Activated CD4-positive, alpha-beta T cell treated with anti-CD3 and anti-CD28 coated beads for 36 hours (primary cell): ENCODE measurements at regions of chr10 and their contacts with region 1.

Region 1: DNA sequence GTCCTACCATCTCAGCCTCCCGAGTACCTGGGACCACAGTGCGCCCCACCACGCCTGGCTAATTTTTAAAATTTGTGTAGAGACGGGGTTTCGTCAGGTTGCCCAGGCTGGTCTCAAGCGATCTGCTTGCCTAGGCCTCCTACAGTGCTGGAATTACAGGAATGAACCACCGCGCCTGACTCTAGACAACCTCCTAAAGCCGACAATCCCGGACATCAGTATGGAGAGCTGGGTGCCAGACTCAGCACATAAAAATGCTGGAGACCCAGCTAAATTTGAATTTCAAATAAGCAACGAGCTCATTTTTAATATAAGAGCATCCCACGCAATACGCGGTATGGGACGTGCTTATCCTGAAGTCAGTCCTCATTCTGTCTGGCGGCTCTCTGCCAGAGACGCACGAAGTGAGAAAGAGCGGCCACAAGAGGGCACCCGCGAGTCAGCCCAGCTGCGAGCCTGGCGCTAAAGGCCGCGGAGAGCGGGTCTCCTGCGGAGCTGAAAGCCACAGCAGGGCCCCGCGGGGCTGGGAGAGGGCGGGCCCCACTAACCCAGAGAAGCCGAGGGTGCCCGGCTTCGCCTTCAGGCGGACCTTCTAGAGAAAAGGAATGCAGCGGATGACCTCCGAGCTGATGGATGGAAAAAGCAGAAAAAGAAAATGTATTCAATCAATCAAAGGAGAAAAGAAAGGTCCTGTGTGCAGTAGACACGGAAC is 7.0 kb downstream of the CALY start:
- DNase-seq: peak; percentile 94
- ATAC-seq: peak; percentile 96
- H3K4me3 Mint-ChIP-seq: peak overlapping the region; percentile 23
- H3K27ac Mint-ChIP-seq: no peak overlapping the region
- H3K4me1 Mint-ChIP-seq: peaks cover 10% of the 10 kb centered on the region
- H3K27me3 Mint-ChIP-seq: peaks cover 31% of the 10 kb centered on the region

Region 2: DNA sequence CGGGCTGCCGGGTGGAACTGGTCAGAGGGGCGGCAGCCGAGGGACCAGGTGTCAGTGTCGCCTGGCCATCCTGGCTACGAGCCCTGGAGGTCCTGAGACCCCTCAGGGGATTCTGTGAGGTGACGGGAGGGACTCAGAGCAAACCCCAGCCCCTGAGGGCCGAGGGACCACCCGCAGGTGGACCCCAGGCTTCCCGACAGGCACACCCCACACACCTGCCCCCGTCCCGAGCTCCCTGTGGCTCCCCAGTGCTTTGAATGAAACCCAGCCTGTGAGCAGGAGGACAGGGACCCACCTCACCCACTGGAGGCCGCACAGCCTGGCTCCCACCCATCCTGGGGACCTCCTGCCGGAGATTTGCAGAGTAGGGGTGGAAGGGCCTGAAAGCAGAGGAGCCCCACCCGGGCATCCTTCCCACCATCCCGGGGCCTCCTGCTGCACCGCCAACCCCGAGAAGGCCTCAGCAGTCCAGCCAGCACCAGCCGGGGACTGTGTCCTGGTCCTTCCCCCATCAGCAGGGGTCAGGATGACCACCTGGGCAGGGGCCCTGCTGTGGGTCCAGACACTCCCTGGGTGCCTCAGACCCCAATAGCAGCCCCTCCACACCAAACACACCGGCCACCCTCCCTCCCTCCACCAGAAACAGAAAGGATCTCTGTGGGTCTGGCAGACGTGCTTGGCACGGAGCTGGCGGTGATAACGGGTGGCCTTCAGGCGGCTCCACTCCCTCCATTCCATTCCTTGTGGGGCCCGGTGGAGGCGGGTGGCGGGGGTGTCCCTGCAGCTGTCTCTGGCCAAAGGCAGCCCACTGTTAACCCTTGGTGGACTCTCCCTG is 78.0 kb before region 1 on chr10:
- CTCF ChIA-PET with region 1: no interaction called
- POLR2A ChIA-PET with region 1: no interaction called
- intact Hi-C with region 1: no loop called
- DNase-seq: no peak
- ATAC-seq: no peak
- H3K4me3 Mint-ChIP-seq: no peak overlapping the region
- H3K27ac Mint-ChIP-seq: no peak overlapping the region
- H3K4me1 Mint-ChIP-seq: no peaks in the 10 kb centered on the region
- H3K27me3 Mint-ChIP-seq: no peaks in the 10 kb centered on the region

Region 3: DNA sequence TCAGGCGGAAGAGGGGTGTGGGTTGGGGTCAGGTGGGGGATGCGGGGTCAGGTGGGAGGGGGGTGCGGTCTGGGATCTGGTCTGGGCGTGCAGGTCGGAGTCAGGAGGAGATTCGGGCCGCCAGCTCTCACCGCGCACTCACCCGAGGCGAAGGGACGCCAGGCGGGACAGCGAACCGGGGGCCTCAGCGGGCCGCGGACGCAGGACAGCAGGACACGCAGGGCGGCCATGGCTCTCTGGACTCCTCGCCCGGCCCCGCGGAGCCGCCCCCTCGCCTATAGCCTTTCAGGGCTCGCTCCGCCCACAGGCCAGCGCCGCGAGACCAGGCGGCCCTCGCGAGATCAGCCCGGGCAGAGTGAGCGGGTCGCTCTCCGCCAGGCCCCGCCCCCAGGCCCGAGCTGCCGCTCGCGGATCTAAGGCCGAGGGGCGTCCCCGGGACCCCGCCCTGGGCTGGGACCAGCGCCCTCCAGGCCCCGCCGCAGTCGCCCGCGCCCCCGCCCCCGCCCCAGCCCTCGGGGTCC is 43.5 kb after region 1 on chr10 and contains the start of gene ECHS1:
- CTCF ChIA-PET with region 1: interaction called, 6 read pairs
- POLR2A ChIA-PET with region 1: no interaction called
- intact Hi-C with region 1: loop called in 1 of 2 experiments (anchors 1 kb)
- DNase-seq: peak; percentile 97
- ATAC-seq: peak; percentile 100
- H3K4me3 Mint-ChIP-seq: peak within 1 kb of the TSS; percentile 73
- H3K27ac Mint-ChIP-seq: peak within 1 kb of the TSS; percentile 79
- H3K4me1 Mint-ChIP-seq: peaks cover 11% of the 10 kb centered on the region
- H3K27me3 Mint-ChIP-seq: no peaks in the 10 kb centered on the region
- total RNA-seq, gene ECHS1: 42.0 to 56.7 TPM

Region 4: GRCh38 chr10:133394064-133394663 is 64.5 kb after region 1 on chr10 and contains the start of gene MTG1:
- CTCF ChIA-PET with region 1: interaction called, 4 read pairs
- POLR2A ChIA-PET with region 1: no interaction called
- intact Hi-C with region 1: loop called (anchors 1 to 5 kb)
- DNase-seq: peak; percentile 97
- ATAC-seq: peak; percentile 76
- H3K4me3 Mint-ChIP-seq: peak within 1 kb of the TSS; percentile 90
- H3K27ac Mint-ChIP-seq: peak within 1 kb of the TSS; percentile 93
- H3K4me1 Mint-ChIP-seq: peaks cover 51% of the 10 kb centered on the region
- H3K27me3 Mint-ChIP-seq: no peaks in the 10 kb centered on the region
- total RNA-seq, gene MTG1: 46.9 to 52.1 TPM

Region 5: DNA sequence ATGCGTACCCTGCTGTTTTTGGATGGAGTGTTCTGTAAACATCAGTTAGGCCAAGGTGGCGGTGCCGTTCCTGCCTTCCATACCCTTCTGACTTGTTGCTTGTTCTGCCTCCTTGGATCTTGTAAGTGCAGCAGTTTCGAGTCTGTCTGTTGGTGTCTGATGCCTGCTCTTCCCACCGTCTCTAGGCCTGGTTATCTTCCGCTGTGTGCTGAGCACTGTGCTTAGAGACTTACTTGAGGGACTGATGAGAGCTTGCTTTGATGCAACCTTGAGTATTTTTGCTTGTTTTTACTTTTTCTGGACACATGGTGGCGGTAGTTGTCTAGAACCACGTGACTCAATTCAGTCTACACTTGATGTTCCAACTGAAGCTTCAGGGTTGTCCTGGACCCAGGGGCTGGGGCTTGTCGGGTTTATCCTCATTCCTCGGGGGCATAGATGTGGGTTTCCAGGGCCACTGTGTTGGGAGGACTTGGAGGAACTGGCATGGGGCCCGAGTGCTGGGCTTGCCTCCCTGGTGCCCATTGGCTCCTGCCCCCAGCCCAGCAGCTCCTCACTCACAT is 109.1 kb after region 1 on chr10:
- CTCF ChIA-PET with region 1: interaction called, 9 read pairs
- POLR2A ChIA-PET with region 1: interaction called, 6 read pairs
- intact Hi-C with region 1: loop called in 1 of 2 experiments (anchors 2 kb)
- DNase-seq: no peak
- ATAC-seq: peak; percentile 59
- H3K4me3 Mint-ChIP-seq: no peak overlapping the region
- H3K27ac Mint-ChIP-seq: no peak overlapping the region
- H3K4me1 Mint-ChIP-seq: peaks cover 17% of the 10 kb centered on the region
- H3K27me3 Mint-ChIP-seq: peaks cover 10% of the 10 kb centered on the region

Region 6: DNA sequence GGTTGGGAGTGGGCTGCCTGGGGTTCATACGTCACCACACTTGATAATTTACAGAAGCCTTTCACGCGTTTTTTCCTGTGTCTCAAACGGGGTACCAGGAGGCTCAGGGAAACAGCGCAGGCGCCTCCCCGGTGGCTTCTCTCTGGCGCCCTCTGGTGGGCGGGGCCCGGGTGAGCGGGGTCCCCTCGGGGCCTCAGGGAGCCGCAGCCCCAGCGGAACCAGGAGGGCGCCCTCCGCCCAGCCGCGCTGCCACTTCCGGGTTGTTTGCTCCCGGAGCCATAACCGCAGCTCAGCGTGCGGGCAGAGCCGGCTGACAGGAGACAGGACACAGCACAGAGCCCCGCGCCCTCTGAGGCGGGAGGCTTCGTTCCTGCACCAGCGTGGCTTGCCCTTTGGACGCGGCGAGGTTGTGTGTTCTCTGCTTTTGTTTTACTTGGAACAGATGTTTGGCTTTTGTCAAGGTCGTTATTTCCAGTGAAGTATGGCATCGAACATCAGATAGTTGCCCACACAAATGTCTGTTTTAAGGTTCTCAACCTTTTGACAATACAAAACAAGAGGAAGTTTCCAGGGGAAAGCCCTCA is 190.6 kb after region 1 on chr10:
- CTCF ChIA-PET with region 1: interaction called, 14 read pairs
- POLR2A ChIA-PET with region 1: no interaction called
- intact Hi-C with region 1: loop called (anchors 1 to 5 kb)
- DNase-seq: peak; percentile 96
- ATAC-seq: peak; percentile 99
- H3K4me3 Mint-ChIP-seq: peak overlapping the region; percentile 66
- H3K27ac Mint-ChIP-seq: peak overlapping the region; percentile 11
- H3K4me1 Mint-ChIP-seq: peaks cover 10% of the 10 kb centered on the region
- H3K27me3 Mint-ChIP-seq: peaks cover 5% of the 10 kb centered on the region